H1 (cell line): ENCODE measurements at regions of chr18 and their contacts with region 1.

Region 1: GRCh38 chr18:50967714-50968661 is at the start of gene ELAC1:
- DNase-seq: peak; percentile 33 to 81
- H3K4me3 ChIP-seq: peak within 1 kb of the TSS; percentile 56 to 91 (median 78)
- H3K27ac ChIP-seq: peak within 1 kb of the TSS; percentile 83; the same call in 1 of the 2 replicates
- H3K4me1 ChIP-seq: peaks cover 2 to 8% (median 4%) of the 10 kb centered on the region in 4 experiments; a peak in 5 of 7 replicates
- H3K27me3 ChIP-seq: no peaks in the 10 kb centered on the region
- CTCF ChIP-seq: peak in 1 of 3 experiments; percentile 15; a peak in 1 of 4 replicates
- EP300 ChIP-seq: peak in 1 of 2 experiments; percentile 35; a peak in 1 of 3 replicates
- POLR2A ChIP-seq: peak; percentile 85 to 97
- RAD21 ChIP-seq: peak in 1 of 2 experiments; percentile 21; a peak in 1 of 4 replicates
- total RNA-seq, gene ELAC1: 3.2 and 3.4 TPM in 2 replicates

Region 2: GRCh38 chr18:50956116-50956515 is 11.9 kb before region 1 on chr18:
- CTCF ChIA-PET with region 1: interaction called, 5 read pairs
- POLR2A ChIA-PET with region 1: interaction called, 14 read pairs
- DNase-seq: no peak
- H3K4me3 ChIP-seq: no peak overlapping the region
- H3K27ac ChIP-seq: no peak overlapping the region
- H3K4me1 ChIP-seq: peaks cover 0 to 2% (median 0%) of the 10 kb centered on the region in 4 experiments; a peak in 2 of 7 replicates
- H3K27me3 ChIP-seq: no peaks in the 10 kb centered on the region
- CTCF ChIP-seq: no peak
- EP300 ChIP-seq: no peak
- POLR2A ChIP-seq: no peak
- RAD21 ChIP-seq: no peak

Region 3: GRCh38 chr18:50986360-50987087 is 18.5 kb after region 1 on chr18:
- CTCF ChIA-PET with region 1: interaction called, 3 read pairs
- POLR2A ChIA-PET with region 1: interaction called, 11 read pairs
- DNase-seq: no peak
- H3K4me3 ChIP-seq: no peak overlapping the region
- H3K27ac ChIP-seq: no peak overlapping the region
- H3K4me1 ChIP-seq: 0 out of 7 replicates have a peak, but pooled peaks cover 0 to 2% (median 0%) of the 10 kb centered on the region in 4 experiments
- H3K27me3 ChIP-seq: no peaks in the 10 kb centered on the region
- CTCF ChIP-seq: no peak
- EP300 ChIP-seq: no peak
- POLR2A ChIP-seq: no peak
- RAD21 ChIP-seq: no peak

Region 4: GRCh38 chr18:51029694-51030536 is 61.9 kb after region 1 on chr18 and contains the start of gene SMAD4:
- CTCF ChIA-PET with region 1: interaction called, 3 read pairs
- POLR2A ChIA-PET with region 1: interaction called, 24 read pairs
- DNase-seq: peak; percentile 90 to 100
- H3K4me3 ChIP-seq: peak within 1 kb of the TSS; percentile 51 to 88 (median 77)
- H3K27ac ChIP-seq: peak within 1 kb of the TSS; percentile 97
- H3K4me1 ChIP-seq: peaks cover 5 to 9% (median 7%) of the 10 kb centered on the region in 4 experiments; a peak in 4 of 7 replicates
- H3K27me3 ChIP-seq: no peaks in the 10 kb centered on the region
- CTCF ChIP-seq: no peak
- EP300 ChIP-seq: no peak
- POLR2A ChIP-seq: peak; percentile 94 to 97
- RAD21 ChIP-seq: no peak
- total RNA-seq, gene SMAD4: 134 and 139 TPM in 2 replicates

Region 5: GRCh38 chr18:51070545-51070944 is 102.6 kb after region 1 on chr18:
- CTCF ChIA-PET with region 1: no interaction called
- POLR2A ChIA-PET with region 1: no interaction called
- DNase-seq: no peak
- H3K4me3 ChIP-seq: no peak overlapping the region
- H3K27ac ChIP-seq: no peak overlapping the region
- H3K4me1 ChIP-seq: no peaks in the 10 kb centered on the region
- H3K27me3 ChIP-seq: no peaks in the 10 kb centered on the region
- CTCF ChIP-seq: no peak
- EP300 ChIP-seq: no peak
- POLR2A ChIP-seq: no peak
- RAD21 ChIP-seq: no peak

Region 6: DNA sequence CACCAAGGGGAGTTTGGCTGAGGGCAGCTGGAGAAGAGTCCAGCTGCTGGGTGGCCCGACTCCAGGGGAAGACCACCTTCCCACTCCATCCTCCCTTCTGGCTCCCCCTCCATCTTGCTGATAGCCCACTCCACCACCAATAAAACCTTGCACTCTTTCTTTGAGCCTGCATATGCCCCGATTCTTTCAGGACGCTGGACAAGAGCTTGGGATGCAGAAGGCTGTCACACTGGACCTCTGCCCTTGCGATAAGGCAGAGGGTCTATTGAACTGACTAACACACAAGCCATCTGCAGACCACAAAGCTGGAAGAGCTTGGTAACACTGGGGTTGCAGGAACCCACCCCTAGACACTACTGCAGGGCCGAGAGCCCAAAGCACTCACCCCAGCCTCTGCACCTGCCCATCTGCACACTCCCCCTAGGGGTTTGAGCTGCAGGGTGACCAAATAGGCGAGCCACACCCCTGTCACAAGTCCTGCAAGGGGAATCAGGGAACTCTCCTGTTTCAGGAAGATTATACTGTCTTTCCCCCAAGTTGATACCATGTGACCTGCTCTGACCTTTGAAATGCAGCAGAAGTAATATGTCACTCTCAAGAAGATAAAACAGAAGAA is 132.5 kb after region 1 on chr18:
- CTCF ChIA-PET with region 1: no interaction called
- POLR2A ChIA-PET with region 1: no interaction called
- DNase-seq: no peak
- H3K4me3 ChIP-seq: no peak overlapping the region
- H3K27ac ChIP-seq: no peak overlapping the region
- H3K4me1 ChIP-seq: no peaks in the 10 kb centered on the region
- H3K27me3 ChIP-seq: no peaks in the 10 kb centered on the region
- CTCF ChIP-seq: no peak
- EP300 ChIP-seq: no peak
- POLR2A ChIP-seq: no peak
- RAD21 ChIP-seq: peak; percentile 21 to 32; a peak in 3 of 4 replicates